ENCODE measurements at regions of chr9 and their contacts with region 1.

Region 1: DNA sequence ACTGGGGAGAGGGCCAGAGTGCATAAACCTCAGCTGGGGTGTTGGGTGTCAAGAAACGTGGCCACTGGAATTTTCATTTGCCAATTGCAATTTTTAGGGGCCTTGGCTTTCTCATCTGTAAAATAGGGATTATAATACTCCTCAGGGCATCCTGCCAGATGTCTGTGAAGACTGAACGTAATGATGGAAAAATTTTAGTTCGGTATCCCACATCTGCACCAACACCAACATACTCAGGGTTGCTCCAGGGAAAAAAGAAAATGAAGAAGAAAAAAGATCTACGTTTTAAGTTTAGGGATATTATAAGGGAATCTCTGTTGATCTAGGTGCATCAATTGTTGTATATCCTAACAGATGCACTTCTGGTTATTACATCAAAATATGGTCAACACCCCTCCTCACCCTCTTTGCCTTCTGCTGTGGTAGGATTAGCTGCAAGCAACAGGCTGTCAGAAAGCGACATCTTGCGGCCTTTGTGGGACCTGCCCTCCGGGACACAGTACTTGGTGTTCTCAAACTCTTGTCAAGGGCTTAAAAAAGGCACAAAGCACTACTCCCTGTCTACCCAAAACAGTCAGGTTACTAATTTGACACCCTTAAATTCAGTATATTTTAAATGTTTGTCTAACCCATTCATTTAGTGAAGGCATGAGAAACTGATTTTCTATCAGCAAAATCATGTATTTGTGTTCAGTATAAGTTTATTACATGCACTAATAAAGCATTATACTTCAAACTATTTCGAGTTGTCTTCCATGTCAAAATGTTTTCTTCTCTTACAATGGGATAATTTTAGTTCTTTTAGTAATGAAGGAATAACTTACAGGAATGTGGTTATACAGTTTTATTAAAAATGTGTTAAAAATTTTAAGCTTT is 8.3 kb upstream of the TBC1D2 start:
- DNase-seq: peak; percentile 84
- H3K4me3 ChIP-seq: no peak overlapping the region
- H3K27ac ChIP-seq: no peak overlapping the region
- H3K4me1 ChIP-seq: no peaks in the 10 kb centered on the region
- CTCF ChIP-seq: peak; percentile 99

Region 2: DNA sequence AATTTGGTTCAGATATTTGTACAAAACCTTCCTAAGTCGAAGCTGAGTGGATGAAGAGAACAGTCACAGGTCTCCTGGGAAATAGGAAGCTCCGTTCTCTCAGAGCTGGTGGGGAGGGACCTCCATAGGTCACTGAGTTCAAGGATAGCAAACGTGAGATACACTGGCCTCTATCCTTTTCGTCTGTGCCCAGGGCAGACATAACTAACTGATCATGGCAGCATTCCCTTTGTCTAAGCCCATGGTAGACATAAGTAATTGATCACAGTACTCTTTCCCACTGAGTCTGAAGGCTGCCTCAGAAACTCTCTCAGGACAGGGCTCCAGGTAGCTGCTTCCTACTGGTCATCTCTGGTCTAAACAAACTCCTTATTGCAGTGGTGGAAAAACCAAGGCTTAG is 59.0 kb before region 1 on chr9:
- CTCF ChIA-PET with region 1: no interaction called
- POLR2A ChIA-PET with region 1: no interaction called
- intact Hi-C with region 1: loop called (anchors 1 kb)
- DNase-seq: no peak
- H3K4me3 ChIP-seq: no peak overlapping the region
- H3K27ac ChIP-seq: no peak overlapping the region
- H3K4me1 ChIP-seq: peaks cover 21% of the 10 kb centered on the region
- CTCF ChIP-seq: no peak

Region 3: GRCh38 chr9:98315551-98316060 is 51.9 kb after region 1 on chr9:
- CTCF ChIA-PET with region 1: no interaction called
- POLR2A ChIA-PET with region 1: no interaction called
- intact Hi-C with region 1: no loop called
- DNase-seq: peak; percentile 89
- H3K4me3 ChIP-seq: no peak overlapping the region
- H3K27ac ChIP-seq: no peak overlapping the region
- H3K4me1 ChIP-seq: no peaks in the 10 kb centered on the region
- CTCF ChIP-seq: peak; percentile 98

Region 4: DNA sequence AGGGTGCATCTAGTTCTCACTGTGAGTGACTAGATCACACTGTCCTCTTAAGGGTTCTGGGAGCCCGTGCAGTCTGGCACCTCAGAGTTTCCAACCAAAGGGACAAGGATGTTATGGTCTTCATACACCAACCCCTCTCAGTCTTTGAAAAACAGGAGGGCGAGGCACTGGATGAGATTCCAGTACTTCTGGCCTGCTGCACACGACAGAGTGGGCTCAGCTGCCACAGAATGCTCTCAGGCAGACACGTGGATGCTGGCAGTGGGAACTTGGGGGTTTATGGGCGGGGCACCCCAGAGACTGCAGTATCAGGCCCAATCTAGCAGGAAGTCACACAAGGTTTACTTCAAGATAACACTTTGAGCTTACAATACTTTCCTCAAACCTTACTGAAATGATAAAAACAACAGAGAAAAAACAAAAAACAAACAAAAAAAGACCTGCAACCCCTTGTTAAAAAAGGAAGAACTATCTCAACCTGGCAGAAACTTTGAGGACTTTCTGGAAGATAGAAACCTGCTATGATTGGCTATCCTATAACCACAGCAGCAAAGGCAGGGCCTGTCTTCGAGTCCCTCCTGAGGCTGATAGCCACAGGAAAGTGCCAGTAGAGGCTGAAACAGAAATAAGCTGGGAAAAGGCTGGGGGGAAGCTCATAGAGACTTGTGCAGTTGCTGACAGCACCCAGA is 812.9 kb after region 1 on chr9:
- CTCF ChIA-PET with region 1: no interaction called
- POLR2A ChIA-PET with region 1: no interaction called
- intact Hi-C with region 1: no loop called
- DNase-seq: no peak
- H3K4me3 ChIP-seq: no peak overlapping the region
- H3K27ac ChIP-seq: no peak overlapping the region
- H3K4me1 ChIP-seq: peaks cover 8% of the 10 kb centered on the region
- CTCF ChIP-seq: no peak